Astrocyte of the cerebellum (primary cell): ENCODE measurements at regions of chr17 and their contacts with region 1.

Region 1: GRCh38 chr17:61064078-61064951 is 335.3 kb upstream of the TBX2 start:
- DNase-seq: no peak
- H3K4me3 ChIP-seq: no peak overlapping the region
- CTCF ChIP-seq: no peak

Region 2: GRCh38 chr17:61015966-61016365 is 48.3 kb before region 1 on chr17:
- in situ Hi-C with region 1: no loop called
- DNase-seq: no peak
- H3K4me3 ChIP-seq: no peak overlapping the region
- CTCF ChIP-seq: no peak

Region 3: DNA sequence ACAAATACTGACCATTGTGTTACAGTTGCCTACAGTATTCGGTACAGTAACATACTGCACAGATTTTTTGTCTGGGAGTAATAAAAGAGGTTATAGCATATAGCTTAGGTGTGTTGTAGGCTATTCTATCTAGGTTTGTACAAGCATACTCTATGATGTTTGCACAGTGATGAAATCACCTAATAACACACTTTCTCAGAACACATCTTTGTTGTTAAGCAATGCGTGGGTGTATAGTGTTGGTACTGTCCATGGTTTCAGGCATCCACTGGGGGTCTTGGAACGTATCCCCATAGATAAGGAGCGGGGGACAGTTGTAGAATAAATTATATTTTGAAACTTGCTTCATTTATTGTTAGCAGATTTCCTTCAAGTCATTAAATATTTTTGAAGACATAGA is 42.0 kb after region 1 on chr17:
- in situ Hi-C with region 1: loop called (anchors 5 kb)
- DNase-seq: no peak
- H3K4me3 ChIP-seq: no peak overlapping the region
- CTCF ChIP-seq: no peak